Activated CD4-positive, alpha-beta T cell treated with anti-CD3 and anti-CD28 coated beads, Interleukin-2, amount 10 ng/mL, durations not matched to agents 24 days and 14 days (primary cell): ENCODE measurements at regions of chr10 and their contacts with region 1.

Region 1: GRCh38 chr10:17430647-17431355 is 23.6 kb downstream of the ST8SIA6 start:
- DNase-seq: peak; percentile 87
- H3K4me3 Mint-ChIP-seq: no peak overlapping the region
- H3K27ac Mint-ChIP-seq: no peak overlapping the region
- H3K4me1 Mint-ChIP-seq: peaks cover 51% of the 10 kb centered on the region
- H3K27me3 Mint-ChIP-seq: peaks cover 18% of the 10 kb centered on the region

Region 2: GRCh38 chr10:16828114-16828568 is 602.7 kb before region 1 on chr10:
- intact Hi-C with region 1: loop called (anchors 5 kb)
- DNase-seq: peak; percentile 89
- H3K4me3 Mint-ChIP-seq: no peak overlapping the region
- H3K27ac Mint-ChIP-seq: no peak overlapping the region
- H3K4me1 Mint-ChIP-seq: peaks cover 5% of the 10 kb centered on the region
- H3K27me3 Mint-ChIP-seq: peaks cover 7% of the 10 kb centered on the region

Region 3: DNA sequence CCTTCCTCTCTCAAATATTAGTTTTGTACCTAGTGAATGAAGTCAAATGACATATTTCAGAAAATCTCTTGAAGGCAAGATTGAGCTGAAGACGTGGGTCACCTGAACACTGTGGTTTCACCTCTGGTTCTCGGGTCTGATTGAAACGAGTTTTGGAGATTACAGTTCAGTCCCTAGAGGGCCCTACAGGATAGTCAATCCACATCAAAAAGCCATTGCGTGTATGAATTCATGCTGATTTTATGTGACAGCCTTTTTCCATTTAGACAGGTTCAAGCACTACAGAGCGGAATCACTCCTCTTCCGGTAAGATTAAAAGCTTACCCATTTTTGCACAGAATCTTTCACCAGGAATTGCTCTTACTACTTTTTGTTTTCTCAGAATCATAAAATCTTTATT is 140.6 kb before region 1 on chr10:
- intact Hi-C with region 1: loop called (anchors 5 kb)
- DNase-seq: peak; percentile 60
- H3K4me3 Mint-ChIP-seq: no peak overlapping the region
- H3K27ac Mint-ChIP-seq: no peak overlapping the region
- H3K4me1 Mint-ChIP-seq: peaks cover 5% of the 10 kb centered on the region
- H3K27me3 Mint-ChIP-seq: peaks cover 21% of the 10 kb centered on the region

Region 4: GRCh38 chr10:17409170-17409733 is 21.5 kb before region 1 on chr10:
- intact Hi-C with region 1: loop called (anchors 1 kb)
- DNase-seq: peak; percentile 71
- H3K4me3 Mint-ChIP-seq: no peak overlapping the region
- H3K27ac Mint-ChIP-seq: no peak overlapping the region
- H3K4me1 Mint-ChIP-seq: peaks cover 14% of the 10 kb centered on the region
- H3K27me3 Mint-ChIP-seq: peaks cover 12% of the 10 kb centered on the region